ENCODE measurements at regions of chr2 and their contacts with region 1.

Region 1: GRCh38 chr2:67234439-67234838 is 162.7 kb upstream of the ETAA1 start:
- DNase-seq: peak; percentile 88
- H3K4me3 ChIP-seq: no peak overlapping the region
- H3K27ac ChIP-seq: no peak overlapping the region
- H3K4me1 ChIP-seq: peaks cover 25% of the 10 kb centered on the region
- H3K27me3 ChIP-seq: no peaks in the 10 kb centered on the region
- CTCF ChIP-seq: peak; percentile 84

Region 2: GRCh38 chr2:65647249-65647842 is 1587.1 kb before region 1 on chr2:
- CTCF ChIA-PET with region 1: no interaction called
- POLR2A ChIA-PET with region 1: no interaction called
- intact Hi-C with region 1: loop called (anchors 10 kb)
- DNase-seq: no peak
- H3K4me3 ChIP-seq: no peak overlapping the region
- H3K27ac ChIP-seq: no peak overlapping the region
- H3K4me1 ChIP-seq: peaks cover 38% of the 10 kb centered on the region
- H3K27me3 ChIP-seq: no peaks in the 10 kb centered on the region
- CTCF ChIP-seq: no peak

Region 3: DNA sequence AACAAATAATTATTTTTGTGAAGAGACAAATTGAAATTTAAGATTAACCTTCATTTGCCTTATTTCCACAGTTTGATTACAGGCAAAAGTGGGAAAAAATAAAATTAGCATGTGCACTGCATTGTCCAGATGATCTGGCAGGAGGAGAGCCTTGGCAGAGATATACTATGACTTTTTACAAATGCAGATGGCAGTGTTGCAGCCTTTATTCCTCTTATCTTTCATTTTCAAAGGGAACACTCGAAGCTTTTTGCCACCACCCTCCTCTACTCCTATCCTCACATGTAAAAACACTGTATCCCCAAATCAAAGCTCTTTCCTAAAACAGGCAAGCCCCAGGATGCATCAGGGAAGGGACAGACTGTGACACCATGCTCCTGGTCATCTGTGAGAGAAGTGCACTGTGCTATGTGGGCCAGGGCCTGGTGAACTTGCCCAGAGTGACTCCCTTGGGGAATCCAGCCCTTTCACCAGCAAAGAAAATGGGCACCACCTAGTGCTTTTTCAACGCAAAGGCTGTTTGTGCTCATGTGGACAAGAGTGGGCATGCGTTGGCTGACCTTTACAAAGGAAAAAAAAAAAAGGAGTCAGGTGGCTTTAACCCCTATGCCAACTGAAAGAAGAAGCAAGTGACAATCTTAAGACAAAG is 88.0 kb after region 1 on chr2:
- CTCF ChIA-PET with region 1: no interaction called
- POLR2A ChIA-PET with region 1: no interaction called
- intact Hi-C with region 1: loop called (anchors 5 kb)
- DNase-seq: peak; percentile 76
- H3K4me3 ChIP-seq: no peak overlapping the region
- H3K27ac ChIP-seq: peak overlapping the region; percentile 34
- H3K4me1 ChIP-seq: peaks cover 49% of the 10 kb centered on the region
- H3K27me3 ChIP-seq: no peaks in the 10 kb centered on the region
- CTCF ChIP-seq: peak; percentile 67

Region 4: GRCh38 chr2:67840460-67841068 is 606.1 kb after region 1 on chr2:
- CTCF ChIA-PET with region 1: no interaction called
- POLR2A ChIA-PET with region 1: interaction called, 3 read pairs
- intact Hi-C with region 1: loop called (anchors 5 kb)
- DNase-seq: peak; percentile 88
- H3K4me3 ChIP-seq: no peak overlapping the region
- H3K27ac ChIP-seq: no peak overlapping the region
- H3K4me1 ChIP-seq: peaks cover 16% of the 10 kb centered on the region
- H3K27me3 ChIP-seq: no peaks in the 10 kb centered on the region
- CTCF ChIP-seq: peak; percentile 96

Measured in A673 (cell line).